Left cardiac atrium (tissue), 4 donors: ENCODE measurements at regions of chr10 and their contacts with region 1.

Region 1: GRCh38 chr10:22316285-22317120 is at the start of gene COMMD3:
- DNase-seq: peak; percentile 92
- ATAC-seq: peak; percentile 91 to 93
- total RNA-seq, gene COMMD3: 73.5 to 74.8 TPM

Region 2: DNA sequence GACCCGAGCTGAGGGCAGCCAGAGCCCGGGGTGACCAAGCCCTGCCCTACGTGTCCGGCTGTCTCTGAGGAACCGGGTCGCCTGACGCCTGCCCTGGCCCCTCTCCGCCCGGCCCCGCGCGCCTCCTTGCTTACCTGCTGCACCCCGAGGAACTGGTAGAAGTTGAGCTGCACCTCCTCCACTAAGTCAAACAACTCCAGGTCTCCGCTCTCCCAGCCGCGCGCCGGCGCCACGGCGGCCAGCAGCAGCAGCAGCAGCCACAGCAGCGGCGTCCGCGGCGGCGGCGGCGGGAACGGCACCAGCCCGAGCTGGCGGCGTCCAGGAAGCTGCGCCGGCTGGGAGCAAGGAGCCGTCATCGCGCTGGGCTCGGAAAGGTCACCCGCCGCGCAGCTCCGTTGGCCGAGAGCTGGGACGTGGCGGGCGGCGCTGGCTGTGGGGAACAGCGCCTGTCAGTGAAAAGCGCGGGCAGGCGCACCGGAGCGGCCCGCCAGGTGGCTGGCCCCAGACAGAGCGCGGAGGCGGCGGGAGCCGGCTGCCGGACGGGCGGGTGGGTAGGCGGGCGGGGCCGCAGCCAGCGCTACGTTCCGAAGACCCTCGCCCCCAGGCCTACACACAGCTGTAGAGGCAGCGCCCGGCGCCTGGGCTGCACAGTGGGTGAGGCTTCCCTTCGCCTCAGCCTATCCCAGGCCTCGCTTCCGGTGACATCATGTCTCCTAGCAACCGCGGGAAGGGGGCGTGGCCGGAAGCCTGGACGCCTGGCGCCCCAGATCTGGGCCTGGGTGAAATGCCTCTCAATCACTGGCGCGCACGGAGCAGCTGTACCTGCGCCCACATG is 313.2 kb before region 1 on chr10 and contains the start of gene DNAJC1:
- intact Hi-C with region 1: loop called in 1 of 2 experiments (anchors 10 kb)
- DNase-seq: peak; percentile 98
- ATAC-seq: peak; percentile 99 to 100
- total RNA-seq, gene DNAJC1: 16.1 to 20.8 TPM

Region 3: GRCh38 chr10:22228943-22229801 is 87.3 kb before region 1 on chr10:
- intact Hi-C with region 1: loop called in 1 of 2 experiments (anchors 5 kb)
- DNase-seq: peak; percentile 87
- ATAC-seq: peak; percentile 99

Region 4: DNA sequence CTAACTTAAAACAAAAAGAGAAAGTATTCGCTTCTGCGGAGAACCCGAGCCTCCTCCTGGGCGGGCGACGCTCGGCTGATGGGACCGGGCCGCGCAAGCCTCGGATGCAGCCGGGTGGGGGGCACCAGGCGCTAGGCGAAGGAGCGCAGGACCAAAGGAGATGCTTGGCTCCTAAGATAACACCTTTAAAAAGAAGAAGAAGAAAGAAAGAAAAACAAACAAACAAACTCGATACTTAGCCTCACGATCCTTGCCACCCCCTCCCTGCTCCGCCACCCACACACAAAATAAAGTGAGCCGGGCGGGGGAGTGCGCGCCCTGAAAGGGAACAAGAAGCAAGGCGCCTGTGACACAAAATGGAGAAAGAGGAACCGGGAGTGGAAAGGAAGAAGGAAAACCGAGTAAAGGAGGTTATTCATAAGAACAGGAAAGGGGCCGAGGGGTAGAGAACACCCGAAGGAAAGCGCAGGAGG is 64.7 kb before region 1 on chr10:
- intact Hi-C with region 1: loop called (anchors 5 to 10 kb)
- DNase-seq: peak; percentile 77
- ATAC-seq: peak; percentile 58 to 63